Caco-2 (cell line): ENCODE measurements at regions of chr6 and their contacts with region 1.

Region 1: GRCh38 chr6:148414836-148415235 is 72.2 kb downstream of the SASH1 start:
- DNase-seq: no peak
- H3K4me3 ChIP-seq: no peak overlapping the region
- H3K4me3 Mint-ChIP-seq: peak overlapping the region; percentile 38
- H3K27ac Mint-ChIP-seq: no peak overlapping the region
- H3K4me1 ChIP-seq: peaks cover 53% of the 10 kb centered on the region
- H3K4me1 Mint-ChIP-seq: peaks cover 33% of the 10 kb centered on the region
- H3K27me3 ChIP-seq: no peaks in the 10 kb centered on the region
- H3K27me3 Mint-ChIP-seq: no peaks in the 10 kb centered on the region
- CTCF ChIP-seq: no peak

Region 2: DNA sequence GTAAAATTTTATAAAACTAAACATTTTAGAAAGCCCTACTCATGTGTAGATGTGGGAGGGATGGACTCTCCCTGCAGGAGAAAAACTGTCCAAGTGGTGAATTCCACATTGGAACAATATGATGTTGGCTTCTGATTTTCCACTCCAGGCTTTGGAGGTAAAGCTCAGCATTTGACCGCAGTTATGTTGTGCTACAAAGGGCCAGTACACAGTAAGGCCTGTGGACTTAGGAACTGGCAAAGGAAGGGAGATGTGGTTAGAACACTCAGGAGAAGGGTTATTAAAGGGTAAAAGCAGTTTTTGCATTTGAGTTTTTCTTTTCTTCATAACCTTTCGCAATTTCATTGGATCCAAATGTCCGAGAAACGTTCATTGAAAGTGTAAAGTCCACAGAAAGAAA is 222.5 kb before region 1 on chr6:
- CTCF ChIA-PET with region 1: no interaction called
- POLR2A ChIA-PET with region 1: no interaction called
- intact Hi-C with region 1: loop called (anchors 2 kb)
- DNase-seq: no peak
- H3K4me3 ChIP-seq: no peak overlapping the region
- H3K4me3 Mint-ChIP-seq: no peak overlapping the region
- H3K27ac Mint-ChIP-seq: peak overlapping the region; percentile 81
- H3K4me1 ChIP-seq: peaks cover 36% of the 10 kb centered on the region
- H3K4me1 Mint-ChIP-seq: peaks cover 22% of the 10 kb centered on the region
- H3K27me3 ChIP-seq: no peaks in the 10 kb centered on the region
- H3K27me3 Mint-ChIP-seq: no peaks in the 10 kb centered on the region
- CTCF ChIP-seq: no peak

Region 3: GRCh38 chr6:148263010-148263409 is 151.8 kb before region 1 on chr6:
- CTCF ChIA-PET with region 1: no interaction called
- POLR2A ChIA-PET with region 1: interaction called, 4 read pairs
- intact Hi-C with region 1: loop called (anchors 2 kb)
- DNase-seq: no peak
- H3K4me3 ChIP-seq: no peak overlapping the region
- H3K4me3 Mint-ChIP-seq: no peak overlapping the region
- H3K27ac Mint-ChIP-seq: peak overlapping the region; percentile 85
- H3K4me1 ChIP-seq: peaks cover 34% of the 10 kb centered on the region
- H3K4me1 Mint-ChIP-seq: peaks cover 34% of the 10 kb centered on the region
- H3K27me3 ChIP-seq: no peaks in the 10 kb centered on the region
- H3K27me3 Mint-ChIP-seq: no peaks in the 10 kb centered on the region
- CTCF ChIP-seq: no peak

Region 4: GRCh38 chr6:148342357-148343046 is 72.3 kb before region 1 on chr6 and contains the start of gene SASH1:
- CTCF ChIA-PET with region 1: no interaction called
- POLR2A ChIA-PET with region 1: no interaction called
- intact Hi-C with region 1: loop called (anchors 5 kb)
- DNase-seq: peak; percentile 82 to 84
- H3K4me3 ChIP-seq: peak within 1 kb of the TSS; percentile 84
- H3K4me3 Mint-ChIP-seq: peak within 1 kb of the TSS; percentile 84
- H3K27ac Mint-ChIP-seq: peak within 1 kb of the TSS; percentile 98
- H3K4me1 ChIP-seq: peaks cover 20% of the 10 kb centered on the region
- H3K4me1 Mint-ChIP-seq: peaks cover 19% of the 10 kb centered on the region
- H3K27me3 ChIP-seq: no peaks in the 10 kb centered on the region
- H3K27me3 Mint-ChIP-seq: no peaks in the 10 kb centered on the region
- CTCF ChIP-seq: no peak
- total RNA-seq, gene SASH1: 41.7 and 42.0 TPM in 2 replicates

Region 5: GRCh38 chr6:148426317-148426977 is 11.6 kb after region 1 on chr6:
- CTCF ChIA-PET with region 1: no interaction called
- POLR2A ChIA-PET with region 1: no interaction called
- intact Hi-C with region 1: loop called (anchors 1 kb)
- DNase-seq: no peak
- H3K4me3 ChIP-seq: no peak overlapping the region
- H3K4me3 Mint-ChIP-seq: no peak overlapping the region
- H3K27ac Mint-ChIP-seq: peak overlapping the region; percentile 66
- H3K4me1 ChIP-seq: peaks cover 30% of the 10 kb centered on the region
- H3K4me1 Mint-ChIP-seq: peaks cover 23% of the 10 kb centered on the region
- H3K27me3 ChIP-seq: no peaks in the 10 kb centered on the region
- H3K27me3 Mint-ChIP-seq: no peaks in the 10 kb centered on the region
- CTCF ChIP-seq: no peak

Region 6: DNA sequence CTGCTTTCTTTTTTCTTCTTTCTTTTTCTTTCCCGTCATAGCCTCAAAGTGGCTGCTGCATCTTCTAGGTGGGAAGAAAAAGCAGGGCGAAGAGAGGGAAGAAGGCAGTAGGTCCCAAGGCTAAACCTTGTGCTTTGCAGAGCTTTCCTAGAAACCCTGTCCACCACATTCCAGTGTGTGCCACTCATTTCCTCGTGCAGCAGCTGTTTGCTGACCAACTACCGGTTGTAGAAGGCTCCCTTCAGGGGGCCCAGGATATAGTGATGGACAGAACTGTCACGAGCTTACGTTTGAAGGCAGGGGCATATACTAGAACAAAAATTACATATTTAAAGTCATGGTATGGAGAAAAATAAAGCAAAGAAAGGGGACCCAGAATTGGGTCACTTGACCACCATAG is 30.8 kb after region 1 on chr6:
- CTCF ChIA-PET with region 1: no interaction called
- POLR2A ChIA-PET with region 1: no interaction called
- intact Hi-C with region 1: loop called (anchors 1 kb)
- DNase-seq: no peak
- H3K4me3 ChIP-seq: no peak overlapping the region
- H3K4me3 Mint-ChIP-seq: no peak overlapping the region
- H3K27ac Mint-ChIP-seq: peak overlapping the region; percentile 83
- H3K4me1 ChIP-seq: peaks cover 52% of the 10 kb centered on the region
- H3K4me1 Mint-ChIP-seq: peaks cover 38% of the 10 kb centered on the region
- H3K27me3 ChIP-seq: no peaks in the 10 kb centered on the region
- H3K27me3 Mint-ChIP-seq: no peaks in the 10 kb centered on the region
- CTCF ChIP-seq: no peak

Region 7: GRCh38 chr6:148464319-148465010 is 49.6 kb after region 1 on chr6:
- CTCF ChIA-PET with region 1: no interaction called
- POLR2A ChIA-PET with region 1: no interaction called
- intact Hi-C with region 1: loop called (anchors 5 kb)
- DNase-seq: peak; percentile 58 to 77
- H3K4me3 ChIP-seq: no peak overlapping the region
- H3K4me3 Mint-ChIP-seq: no peak overlapping the region
- H3K27ac Mint-ChIP-seq: peak overlapping the region; percentile 74
- H3K4me1 ChIP-seq: peaks cover 12% of the 10 kb centered on the region
- H3K4me1 Mint-ChIP-seq: peaks cover 13% of the 10 kb centered on the region
- H3K27me3 ChIP-seq: no peaks in the 10 kb centered on the region
- H3K27me3 Mint-ChIP-seq: no peaks in the 10 kb centered on the region
- CTCF ChIP-seq: peak; percentile 87 to 89